ENCODE measurements at regions of chr4 and their contacts with region 1.

Region 1: GRCh38 chr4:1167247-1167949 is 5.0 kb downstream of the SPON2 start:
- DNase-seq: peak; percentile 96
- H3K4me3 Mint-ChIP-seq: peak overlapping the region; percentile 84
- H3K27ac Mint-ChIP-seq: peak overlapping the region; percentile 39
- H3K4me1 Mint-ChIP-seq: peaks cover 26% of the 10 kb centered on the region
- H3K27me3 Mint-ChIP-seq: peaks cover 18% of the 10 kb centered on the region

Region 2: GRCh38 chr4:1130316-1131186 is 36.8 kb before region 1 on chr4:
- intact Hi-C with region 1: loop called (anchors 1 kb)
- DNase-seq: peak; percentile 95
- H3K4me3 Mint-ChIP-seq: no peak overlapping the region
- H3K27ac Mint-ChIP-seq: no peak overlapping the region
- H3K4me1 Mint-ChIP-seq: peaks cover 3% of the 10 kb centered on the region
- H3K27me3 Mint-ChIP-seq: peaks cover 24% of the 10 kb centered on the region

Region 3: DNA sequence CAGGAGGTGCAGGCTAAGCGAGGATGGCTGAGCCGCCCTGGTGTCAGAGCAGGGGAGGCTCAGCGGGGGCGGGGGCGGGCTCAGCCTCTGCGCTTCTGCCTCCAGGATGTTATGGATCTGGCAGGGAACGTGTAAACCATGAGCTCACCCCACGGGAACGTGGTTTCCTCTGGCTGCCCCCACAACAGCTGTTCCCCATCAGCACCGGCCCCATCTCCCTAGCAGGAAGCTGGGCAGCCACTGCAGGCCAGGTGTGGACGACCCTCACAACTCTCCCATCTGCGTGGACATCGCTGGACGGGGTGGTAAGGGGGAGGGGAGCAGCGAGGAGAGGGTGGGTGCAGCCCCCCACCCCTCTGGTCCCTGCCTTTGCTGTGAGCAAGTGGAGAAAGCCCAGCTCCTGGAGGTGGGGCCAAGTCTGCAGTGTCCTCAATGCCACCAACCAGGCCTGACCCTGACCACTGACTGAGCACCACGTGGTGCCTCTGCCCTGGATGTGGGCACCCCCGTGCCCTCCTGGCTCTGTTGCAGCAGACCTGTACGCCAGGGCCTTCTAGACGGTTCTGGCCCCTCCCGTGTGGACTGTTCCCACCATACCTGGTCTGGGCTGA is 33.1 kb after region 1 on chr4:
- intact Hi-C with region 1: loop called (anchors 1 kb)
- DNase-seq: no peak
- H3K4me3 Mint-ChIP-seq: peak overlapping the region; percentile 75
- H3K27ac Mint-ChIP-seq: peak overlapping the region; percentile 99
- H3K4me1 Mint-ChIP-seq: peaks cover 38% of the 10 kb centered on the region
- H3K27me3 Mint-ChIP-seq: no peaks in the 10 kb centered on the region

Region 4: GRCh38 chr4:1249148-1249730 is 81.8 kb after region 1 on chr4:
- intact Hi-C with region 1: loop called (anchors 1 kb)
- DNase-seq: peak; percentile 96
- H3K4me3 Mint-ChIP-seq: peak overlapping the region; percentile 90
- H3K27ac Mint-ChIP-seq: peak overlapping the region; percentile 97
- H3K4me1 Mint-ChIP-seq: peaks cover 44% of the 10 kb centered on the region
- H3K27me3 Mint-ChIP-seq: no peaks in the 10 kb centered on the region

Region 5: GRCh38 chr4:1289207-1290164 is 122.1 kb after region 1 on chr4 and contains the start of gene MAEA:
- intact Hi-C with region 1: loop called (anchors 1 kb)
- DNase-seq: peak; percentile 99
- H3K4me3 Mint-ChIP-seq: peak within 1 kb of the TSS; percentile 95
- H3K27ac Mint-ChIP-seq: peak within 1 kb of the TSS; percentile 90
- H3K4me1 Mint-ChIP-seq: peaks cover 26% of the 10 kb centered on the region
- H3K27me3 Mint-ChIP-seq: no peaks in the 10 kb centered on the region
- total RNA-seq, gene MAEA: 61.3 and 62.6 TPM in 2 replicates

Region 6: GRCh38 chr4:1351854-1352633 is 184.6 kb after region 1 on chr4:
- intact Hi-C with region 1: loop called (anchors 1 kb)
- DNase-seq: peak; percentile 97
- H3K4me3 Mint-ChIP-seq: no peak overlapping the region
- H3K27ac Mint-ChIP-seq: peak overlapping the region; percentile 72
- H3K4me1 Mint-ChIP-seq: peaks cover 22% of the 10 kb centered on the region
- H3K27me3 Mint-ChIP-seq: no peaks in the 10 kb centered on the region